Psoas muscle (tissue), 8 donors: ENCODE measurements at regions of chr3 and their contacts with region 1.

Region 1: DNA sequence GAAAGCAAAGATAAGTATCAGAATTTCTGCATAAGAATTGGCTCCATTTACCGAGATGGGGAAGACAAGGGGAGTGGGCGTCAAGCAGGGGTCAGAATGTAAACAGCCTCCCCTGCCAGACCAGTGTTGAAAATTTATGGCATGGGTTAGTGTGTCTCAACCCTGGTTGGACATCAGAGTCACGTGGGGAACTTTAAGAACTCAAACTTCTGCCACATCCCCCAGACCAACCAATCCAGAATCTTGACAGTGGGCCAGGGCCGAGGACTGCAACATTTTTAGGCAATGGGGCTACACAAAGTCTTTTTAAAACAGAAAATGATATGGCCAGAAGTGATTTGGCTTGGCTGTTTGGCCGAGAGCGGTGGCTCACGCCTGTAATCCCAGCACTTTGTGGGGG is 14.3 kb upstream of the MASP1 start:
- DNase-seq: no peak
- ATAC-seq: no peak
- H3K4me3 ChIP-seq: no peak overlapping the region
- H3K27ac ChIP-seq: no peak overlapping the region
- H3K4me1 ChIP-seq: no peaks in the 10 kb centered on the region
- H3K27me3 ChIP-seq: no peaks in the 10 kb centered on the region
- CTCF ChIP-seq: no peak

Region 2: DNA sequence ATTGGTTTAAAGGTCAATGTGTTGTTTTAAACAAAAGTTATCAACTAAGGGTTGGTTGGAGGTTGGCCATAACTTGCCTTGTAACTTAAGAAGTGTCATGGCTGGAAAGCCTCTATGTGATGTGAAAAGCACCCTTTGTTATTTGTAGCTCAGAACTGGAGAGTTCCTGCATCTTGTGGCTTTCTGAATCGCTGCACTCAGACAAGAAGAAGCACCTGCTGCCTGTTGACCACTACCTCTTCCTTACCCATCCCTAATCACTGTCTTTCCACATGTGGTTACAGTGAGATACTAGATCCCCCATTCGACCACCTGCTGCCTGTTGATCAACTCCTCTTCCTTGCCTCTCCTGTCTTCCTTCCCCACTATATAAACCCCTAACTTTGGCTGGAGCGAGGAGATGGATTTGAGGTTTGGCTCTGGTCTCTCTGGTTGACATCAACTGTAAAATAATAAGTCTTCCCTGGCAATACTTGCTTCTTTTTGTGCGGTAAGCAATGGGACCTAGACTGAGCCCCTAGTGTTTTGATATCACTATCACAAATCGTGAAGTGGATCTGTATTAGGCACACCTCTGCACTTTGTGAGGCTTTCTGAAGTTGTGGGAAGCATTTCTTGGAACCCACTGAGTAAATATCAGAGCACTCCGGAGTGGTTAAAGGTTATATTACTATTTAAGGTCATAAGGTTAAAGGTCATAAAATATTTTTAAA is 180.4 kb before region 1 on chr3:
- intact Hi-C with region 1: loop called in 1 of 2 experiments (anchors 10 kb)
- DNase-seq: no peak
- ATAC-seq: no peak
- H3K4me3 ChIP-seq: no peak overlapping the region
- H3K27ac ChIP-seq: no peak overlapping the region
- H3K4me1 ChIP-seq: no peaks in the 10 kb centered on the region
- H3K27me3 ChIP-seq: no peaks in the 10 kb centered on the region
- CTCF ChIP-seq: no peak

Region 3: DNA sequence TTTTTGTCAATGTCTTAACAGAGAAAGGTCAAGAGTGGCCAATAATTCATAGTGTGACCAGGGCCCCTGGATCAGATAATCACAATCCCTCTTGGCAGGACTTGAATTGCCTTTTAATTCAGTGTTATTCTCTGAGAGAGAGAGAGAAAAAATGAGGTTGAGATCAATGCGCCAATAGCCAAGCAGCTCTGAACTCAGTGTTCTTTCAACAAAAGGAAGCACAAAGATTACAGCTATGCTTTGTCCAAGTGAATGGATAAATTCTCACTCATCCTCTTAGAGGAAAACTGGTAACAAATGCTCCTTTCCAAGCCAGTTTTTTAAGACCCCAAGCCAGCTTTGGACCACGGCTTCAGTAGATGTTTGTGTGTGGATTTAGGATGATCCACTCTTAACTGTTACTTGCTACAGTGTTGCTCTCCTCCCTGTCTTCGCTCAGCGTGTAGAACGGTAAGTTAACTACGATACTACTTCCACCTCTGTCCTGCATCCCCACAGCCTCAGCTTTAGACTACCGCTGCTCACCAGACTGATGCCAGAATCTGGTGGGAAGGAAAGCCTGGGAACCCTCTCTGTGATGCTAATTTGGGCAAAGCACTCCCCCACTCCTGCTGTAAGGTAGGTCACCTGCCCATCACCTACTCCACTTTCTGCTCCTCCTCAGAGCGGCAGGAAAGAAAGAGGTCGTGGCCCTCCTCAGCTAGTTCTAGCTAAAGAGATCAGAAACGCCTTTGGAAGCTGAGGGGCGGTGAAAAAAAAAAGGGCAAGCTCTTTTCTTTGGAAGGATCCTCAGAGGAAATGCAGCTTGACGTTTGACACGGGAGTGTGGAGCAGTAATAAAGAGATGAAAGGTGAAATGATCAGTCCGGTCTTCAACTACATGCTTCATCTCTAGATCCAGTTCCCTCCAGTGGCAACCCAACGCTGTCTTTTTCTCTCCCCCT is 801.3 kb after region 1 on chr3:
- intact Hi-C with region 1: no loop called
- DNase-seq: no peak
- ATAC-seq: no peak
- H3K4me3 ChIP-seq: no peak overlapping the region
- H3K27ac ChIP-seq: no peak overlapping the region
- H3K4me1 ChIP-seq: no peaks in the 10 kb centered on the region
- H3K27me3 ChIP-seq: no peaks in the 10 kb centered on the region
- CTCF ChIP-seq: no peak